Head of caudate nucleus (tissue), 42 donors: ENCODE measurements at regions of chr9 and their contacts with region 1.

Region 1: DNA sequence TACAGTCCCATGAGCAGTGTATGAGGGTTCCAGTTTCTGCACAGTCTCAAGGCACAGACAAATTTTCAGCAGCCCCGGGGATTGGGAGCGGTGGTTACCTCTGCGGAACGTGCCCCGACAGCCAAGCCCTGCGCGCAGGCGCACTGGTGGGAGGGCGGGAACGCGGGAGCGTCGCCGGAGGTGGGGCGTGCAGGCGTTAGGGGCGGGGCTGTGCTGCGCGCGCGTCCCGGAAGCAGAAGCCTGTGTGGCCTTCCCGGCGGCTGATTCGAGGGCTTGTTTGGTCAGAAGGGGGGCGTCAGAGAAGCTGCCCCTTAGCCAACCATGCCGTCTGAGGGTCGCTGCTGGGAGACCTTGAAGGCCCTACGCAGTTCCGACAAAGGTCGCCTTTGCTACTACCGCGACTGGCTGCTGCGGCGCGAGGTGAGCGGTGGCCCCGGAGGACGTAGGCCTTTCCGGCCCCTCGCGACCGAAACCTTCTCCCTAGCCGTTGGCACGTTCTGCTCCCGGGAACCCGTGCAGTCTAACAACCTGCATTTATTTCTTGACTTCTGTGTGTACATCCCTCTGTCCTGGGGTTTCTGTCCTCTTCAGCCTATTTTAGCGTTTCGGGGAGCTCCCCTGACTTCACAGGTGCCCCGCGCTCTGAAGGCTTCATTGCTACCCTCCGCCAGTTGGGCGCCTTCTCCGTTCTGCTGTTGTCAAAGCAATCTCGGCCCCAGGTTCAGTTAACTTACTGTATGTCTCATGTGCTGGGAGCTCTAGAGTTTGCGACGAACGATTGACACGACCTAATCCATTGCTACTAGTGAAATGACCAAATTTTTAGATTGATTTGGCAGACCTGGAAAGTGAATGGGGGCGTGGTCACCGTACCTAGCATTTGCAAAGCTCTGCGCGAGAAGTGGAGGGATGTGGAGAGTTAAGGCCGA is at the start of gene GLE1:
- DNase-seq: peak; percentile 87 to 99 (median 96)

Region 2: GRCh38 chr9:128393171-128393775 is 111.5 kb before region 1 on chr9:
- intact Hi-C with region 1: no loop called
- DNase-seq: peak; percentile 67 to 97 (median 90)

Region 3: DNA sequence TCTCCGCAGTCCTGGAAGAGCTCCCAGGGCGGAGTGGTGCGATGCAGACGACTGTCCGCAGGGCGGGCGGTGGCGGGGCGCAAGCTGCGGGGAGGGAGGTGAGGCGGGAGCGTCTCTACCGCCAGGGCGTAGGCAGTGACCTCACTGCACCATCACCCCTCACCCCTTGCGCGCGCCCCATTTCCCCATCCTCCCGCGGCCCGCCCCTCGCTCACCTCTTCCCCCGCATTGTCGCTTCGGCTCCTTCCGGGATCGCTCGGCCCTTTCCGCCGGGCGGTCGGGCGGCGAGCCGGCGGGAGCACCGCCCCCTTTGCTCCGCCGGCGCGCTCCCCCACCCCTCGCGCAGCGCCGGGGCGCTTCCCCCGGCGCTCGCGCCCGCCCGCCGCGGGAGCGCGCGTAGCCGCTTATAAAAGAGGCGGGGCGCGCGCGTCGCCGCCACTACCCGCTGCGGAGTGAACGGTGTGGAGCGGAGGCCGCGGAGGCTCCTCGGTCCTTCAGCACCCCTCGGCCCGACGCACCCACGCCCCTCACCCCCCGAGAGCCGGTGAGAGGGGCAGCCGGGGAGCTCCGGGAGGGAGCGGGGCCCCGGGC is 47.5 kb after region 1 on chr9 and contains the start of gene SPTAN1:
- intact Hi-C with region 1: loop called (anchors 2 kb)
- DNase-seq: peak; percentile 65 to 97 (median 93)